Breast epithelium (tissue), 4 donors: ENCODE measurements at regions of chr13 and their contacts with region 1.

Region 1: GRCh38 chr13:53343361-53343744 is 314.7 kb downstream of the OLFM4 start:
- DNase-seq: no peak
- H3K4me3 ChIP-seq: no peak overlapping the region
- H3K27ac ChIP-seq: no peak overlapping the region
- H3K4me1 ChIP-seq: no peaks in the 10 kb centered on the region
- H3K27me3 ChIP-seq: no peaks in the 10 kb centered on the region
- CTCF ChIP-seq: no peak
- POLR2A ChIP-seq: no peak

Region 2: GRCh38 chr13:53368948-53369347 is 25.6 kb after region 1 on chr13:
- intact Hi-C with region 1: no loop called
- DNase-seq: no peak
- H3K4me3 ChIP-seq: no peak overlapping the region
- H3K27ac ChIP-seq: no peak overlapping the region
- H3K4me1 ChIP-seq: no peaks in the 10 kb centered on the region
- H3K27me3 ChIP-seq: no peaks in the 10 kb centered on the region
- CTCF ChIP-seq: no peak
- POLR2A ChIP-seq: no peak

Region 3: DNA sequence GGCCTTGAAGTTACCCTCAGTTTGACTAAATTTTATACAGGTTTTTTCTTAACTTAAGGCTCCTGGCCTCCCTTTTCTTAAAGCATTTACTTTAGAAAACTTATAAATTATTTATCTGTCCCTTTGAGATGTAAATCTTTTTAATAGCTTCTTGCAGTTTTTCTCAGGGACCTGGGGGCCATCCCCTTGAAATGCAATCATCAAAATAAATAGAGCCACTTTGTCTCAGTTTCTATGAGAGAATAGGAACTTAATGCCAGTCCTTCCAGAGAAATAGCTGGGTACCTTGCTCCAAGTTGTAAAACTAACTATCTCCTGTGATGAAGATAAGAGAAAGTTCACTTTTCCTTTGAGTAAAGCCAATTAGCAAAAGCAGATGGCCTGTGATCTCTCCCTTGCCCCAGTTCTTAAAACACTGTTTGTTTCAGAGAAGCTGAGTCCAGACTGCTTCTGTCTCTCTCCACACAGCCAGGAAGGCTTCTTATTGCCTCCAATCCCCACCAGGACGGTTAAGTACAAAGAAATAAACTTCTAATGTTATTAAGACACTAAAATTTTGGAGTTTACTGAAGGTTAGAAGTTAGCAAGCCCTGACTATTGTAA is 598.3 kb after region 1 on chr13:
- intact Hi-C with region 1: loop called (anchors 5 kb)
- DNase-seq: no peak
- H3K4me3 ChIP-seq: no peak overlapping the region
- H3K27ac ChIP-seq: no peak overlapping the region
- H3K4me1 ChIP-seq: no peaks in the 10 kb centered on the region
- H3K27me3 ChIP-seq: no peaks in the 10 kb centered on the region
- CTCF ChIP-seq: no peak
- POLR2A ChIP-seq: no peak